Right cardiac atrium (tissue), 5 donors: ENCODE measurements at regions of chr19 and their contacts with region 1.

Region 1: GRCh38 chr19:49443366-49444099 is 2.2 kb upstream of the SLC17A7 start:
- DNase-seq: peak; percentile 96 to 99 (median 97)
- ATAC-seq: peak; percentile 92
- H3K4me3 ChIP-seq: peak overlapping the region; percentile 64
- H3K27ac ChIP-seq: peak overlapping the region; percentile 55
- H3K4me1 ChIP-seq: no peaks in the 10 kb centered on the region
- H3K27me3 ChIP-seq: no peaks in the 10 kb centered on the region

Region 2: DNA sequence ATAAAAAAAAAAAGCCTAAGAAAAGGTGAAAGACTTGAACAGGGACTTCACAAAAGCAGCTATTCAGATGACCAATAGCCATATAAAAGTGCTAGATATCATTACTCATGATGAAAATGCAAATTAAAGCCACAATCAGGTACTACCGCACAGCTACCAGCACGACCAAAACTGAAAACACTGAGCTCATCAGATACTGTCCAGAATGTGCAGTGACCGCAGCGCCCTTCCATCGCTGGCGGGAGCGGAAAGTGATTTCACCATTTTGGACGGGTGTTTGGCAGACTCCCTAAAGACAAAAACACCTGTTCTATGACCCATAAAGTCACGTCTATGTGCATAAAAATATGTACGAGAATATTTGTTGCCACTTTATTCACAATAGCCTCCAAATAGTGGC is 179.3 kb before region 1 on chr19:
- intact Hi-C with region 1: loop called in 1 of 4 experiments (anchors 10 kb)
- DNase-seq: no peak
- ATAC-seq: no peak
- H3K4me3 ChIP-seq: no peak overlapping the region
- H3K27ac ChIP-seq: no peak overlapping the region
- H3K4me1 ChIP-seq: no peaks in the 10 kb centered on the region
- H3K27me3 ChIP-seq: no peaks in the 10 kb centered on the region

Region 3: DNA sequence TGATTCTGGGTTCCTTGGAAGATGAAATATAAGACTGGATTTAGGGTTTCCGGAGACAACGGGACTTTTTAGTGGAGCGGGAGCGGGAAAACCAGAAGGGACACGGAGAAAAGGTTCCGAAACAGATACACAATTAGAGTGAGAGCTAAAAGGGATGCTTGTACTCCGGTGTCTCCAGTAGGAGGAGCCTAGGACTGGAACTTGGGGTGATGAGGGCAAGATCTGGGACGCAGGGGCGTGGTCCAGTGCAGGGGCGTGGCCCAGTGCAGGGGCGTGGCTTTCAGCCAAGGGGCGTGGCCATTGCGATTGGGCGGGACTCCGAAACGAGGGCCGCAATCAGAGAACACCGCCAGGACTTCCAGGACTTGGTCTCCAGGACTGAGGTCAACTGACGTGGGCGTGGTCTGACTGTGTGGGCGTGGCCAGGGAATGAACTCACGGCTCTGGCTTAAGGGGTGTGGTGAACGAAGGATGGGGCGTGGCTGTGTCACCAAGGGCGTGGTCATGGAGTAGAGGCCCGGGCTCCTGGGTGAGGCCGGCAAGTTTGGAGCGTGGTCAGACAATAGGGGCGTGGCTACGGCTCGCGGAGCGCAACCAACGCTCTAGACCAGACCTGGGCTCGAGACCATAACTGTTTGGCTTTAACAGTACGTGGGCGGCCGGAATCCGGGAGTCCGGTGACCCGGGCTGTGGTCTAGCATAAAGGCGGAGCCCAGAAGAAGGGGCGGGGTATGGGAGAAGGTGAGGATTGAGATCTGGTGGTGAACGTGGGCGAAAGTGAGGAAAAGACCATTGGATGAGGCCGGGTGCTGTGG is 80.1 kb before region 1 on chr19 and contains the start of gene DKKL1:
- intact Hi-C with region 1: loop called in 1 of 4 experiments (anchors 10 kb)
- DNase-seq: peak; percentile 100
- ATAC-seq: peak; percentile 92
- H3K4me3 ChIP-seq: peak within 1 kb of the TSS; percentile 78
- H3K27ac ChIP-seq: peak within 1 kb of the TSS; percentile 90
- H3K4me1 ChIP-seq: no peaks in the 10 kb centered on the region
- H3K27me3 ChIP-seq: no peaks in the 10 kb centered on the region
- total RNA-seq, gene DKKL1: 0.59 to 0.71 TPM in 2 of 4 donors, not detected in the others

Region 4: GRCh38 chr19:49391581-49392399 is 51.7 kb before region 1 on chr19:
- intact Hi-C with region 1: loop called (anchors 1 to 5 kb)
- DNase-seq: peak; percentile 78 to 89 (median 89)
- ATAC-seq: peak; percentile 80 to 83
- H3K4me3 ChIP-seq: no peak overlapping the region
- H3K27ac ChIP-seq: no peak overlapping the region
- H3K4me1 ChIP-seq: no peaks in the 10 kb centered on the region
- H3K27me3 ChIP-seq: no peaks in the 10 kb centered on the region